GM12878 (cell line): ENCODE measurements at regions of chr1 and their contacts with region 1.

Region 1: GRCh38 chr1:45569962-45570581 is 13.8 kb upstream of the NASP start:
- DNase-seq: no peak
- ATAC-seq: peak; percentile 97
- H3K4me3 ChIP-seq: no peak overlapping the region
- H3K27ac ChIP-seq: no peak overlapping the region
- H3K4me1 ChIP-seq: no peaks in the 10 kb centered on the region
- H3K27me3 ChIP-seq: no peaks in the 10 kb centered on the region
- CTCF ChIP-seq: peak; percentile 97 to 99 (median 98); a peak in 5 of 6 replicates
- EP300 ChIP-seq: no peak
- POLR2A ChIP-seq: 0 out of 2 replicates have a peak, but pooled peaks have one; percentile 14
- RAD21 ChIP-seq: peak; percentile 95

Region 2: DNA sequence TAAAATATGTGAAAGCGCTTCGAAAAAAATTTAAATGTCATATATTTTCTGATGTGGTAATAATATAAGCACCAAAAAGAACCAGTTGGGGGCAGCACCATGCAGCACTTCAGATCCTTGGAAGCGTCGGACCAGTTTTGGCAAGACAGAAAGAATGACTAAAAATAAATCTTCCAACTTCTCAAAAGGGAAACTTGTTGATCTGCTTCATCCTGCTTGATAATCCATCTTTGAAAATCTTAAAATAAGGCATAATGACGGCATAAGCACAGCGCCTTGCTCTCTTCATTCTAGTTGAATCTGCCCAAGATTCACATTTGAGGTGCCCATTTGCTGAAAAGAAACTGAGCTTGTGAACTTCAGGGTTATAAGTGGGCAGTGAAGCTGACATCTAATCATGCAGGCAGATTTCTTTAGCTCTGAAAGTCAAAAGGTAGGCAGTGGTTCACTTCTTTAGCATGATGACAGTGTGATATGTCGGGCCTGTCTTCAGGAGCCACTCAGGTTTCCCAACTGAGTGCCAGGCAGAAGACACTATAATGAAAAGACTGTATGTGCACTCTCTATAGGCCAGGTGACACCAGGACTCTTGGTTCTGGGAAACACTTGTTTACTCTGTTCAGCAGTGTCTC is 210.1 kb before region 1 on chr1:
- CTCF ChIA-PET with region 1: interaction called, 9 read pairs
- POLR2A ChIA-PET with region 1: no interaction called
- RAD21 ChIA-PET with region 1: interaction called, 6 read pairs
- SMC1A ChIA-PET with region 1: interaction called, 21 read pairs
- in situ Hi-C with region 1: loop called (anchors 10 kb)
- intact Hi-C with region 1: loop called (anchors 5 kb)
- DNase-seq: no peak
- ATAC-seq: peak; percentile 81
- H3K4me3 ChIP-seq: no peak overlapping the region
- H3K27ac ChIP-seq: no peak overlapping the region
- H3K4me1 ChIP-seq: peaks cover 9% of the 10 kb centered on the region
- H3K27me3 ChIP-seq: no peaks in the 10 kb centered on the region
- CTCF ChIP-seq: peak; percentile 49 to 78 (median 59); a peak in 5 of 6 replicates
- EP300 ChIP-seq: no peak
- POLR2A ChIP-seq: no peak
- RAD21 ChIP-seq: peak; percentile 97

Region 3: DNA sequence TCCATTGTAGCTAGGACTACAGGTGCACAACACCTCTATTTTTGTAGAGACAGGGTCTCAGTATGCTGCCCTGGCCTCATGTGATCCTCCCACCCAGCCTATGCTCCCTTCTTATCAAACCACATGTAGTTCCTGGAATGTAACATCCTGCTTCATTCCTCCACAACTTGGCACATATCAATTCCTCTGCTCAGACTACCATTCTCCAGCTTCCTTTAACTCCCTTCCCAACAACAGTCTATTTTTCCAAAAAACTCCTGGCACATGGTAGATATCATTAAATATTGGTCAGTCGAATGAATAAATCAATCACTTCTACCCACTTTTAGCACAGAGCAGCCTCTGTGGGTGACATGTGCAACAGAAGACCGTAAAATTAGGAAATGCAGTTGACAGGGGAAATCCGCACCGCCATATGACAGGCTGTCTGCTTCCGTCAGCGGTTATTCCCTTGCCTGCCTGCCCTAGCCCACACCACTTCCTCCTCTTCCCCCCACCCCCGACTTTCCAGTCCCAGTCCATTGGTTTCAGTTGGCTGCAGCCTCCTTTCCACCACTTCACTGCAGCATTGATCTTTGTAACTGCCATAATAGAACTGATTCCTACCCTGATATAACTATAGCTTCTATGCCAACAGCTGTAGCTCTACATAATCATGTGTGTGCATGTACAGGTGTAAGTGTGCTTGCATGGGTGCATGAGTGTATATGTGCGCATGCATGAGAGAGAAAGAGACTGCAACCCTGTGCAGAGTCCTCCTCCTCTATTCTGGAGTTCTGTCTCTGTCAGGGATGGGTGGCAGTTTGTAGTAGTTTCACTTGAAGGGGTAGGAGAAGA is 26.3 kb before region 1 on chr1:
- CTCF ChIA-PET with region 1: interaction called, 23 read pairs
- POLR2A ChIA-PET with region 1: interaction called, 4 read pairs
- RAD21 ChIA-PET with region 1: interaction called, 3 read pairs
- SMC1A ChIA-PET with region 1: interaction called, 19 read pairs
- in situ Hi-C with region 1: no loop called
- intact Hi-C with region 1: no loop called
- DNase-seq: peak; percentile 76
- ATAC-seq: peak; percentile 79
- H3K4me3 ChIP-seq: peak overlapping the region; percentile 25; the same call in 1 of the 2 replicates
- H3K27ac ChIP-seq: peak overlapping the region; percentile 78
- H3K4me1 ChIP-seq: peaks cover 30% of the 10 kb centered on the region
- H3K27me3 ChIP-seq: no peaks in the 10 kb centered on the region
- CTCF ChIP-seq: no peak
- EP300 ChIP-seq: peak; percentile 84 to 93
- POLR2A ChIP-seq: 0 out of 2 replicates have a peak, but pooled peaks have one; percentile 29
- RAD21 ChIP-seq: no peak

Region 4: DNA sequence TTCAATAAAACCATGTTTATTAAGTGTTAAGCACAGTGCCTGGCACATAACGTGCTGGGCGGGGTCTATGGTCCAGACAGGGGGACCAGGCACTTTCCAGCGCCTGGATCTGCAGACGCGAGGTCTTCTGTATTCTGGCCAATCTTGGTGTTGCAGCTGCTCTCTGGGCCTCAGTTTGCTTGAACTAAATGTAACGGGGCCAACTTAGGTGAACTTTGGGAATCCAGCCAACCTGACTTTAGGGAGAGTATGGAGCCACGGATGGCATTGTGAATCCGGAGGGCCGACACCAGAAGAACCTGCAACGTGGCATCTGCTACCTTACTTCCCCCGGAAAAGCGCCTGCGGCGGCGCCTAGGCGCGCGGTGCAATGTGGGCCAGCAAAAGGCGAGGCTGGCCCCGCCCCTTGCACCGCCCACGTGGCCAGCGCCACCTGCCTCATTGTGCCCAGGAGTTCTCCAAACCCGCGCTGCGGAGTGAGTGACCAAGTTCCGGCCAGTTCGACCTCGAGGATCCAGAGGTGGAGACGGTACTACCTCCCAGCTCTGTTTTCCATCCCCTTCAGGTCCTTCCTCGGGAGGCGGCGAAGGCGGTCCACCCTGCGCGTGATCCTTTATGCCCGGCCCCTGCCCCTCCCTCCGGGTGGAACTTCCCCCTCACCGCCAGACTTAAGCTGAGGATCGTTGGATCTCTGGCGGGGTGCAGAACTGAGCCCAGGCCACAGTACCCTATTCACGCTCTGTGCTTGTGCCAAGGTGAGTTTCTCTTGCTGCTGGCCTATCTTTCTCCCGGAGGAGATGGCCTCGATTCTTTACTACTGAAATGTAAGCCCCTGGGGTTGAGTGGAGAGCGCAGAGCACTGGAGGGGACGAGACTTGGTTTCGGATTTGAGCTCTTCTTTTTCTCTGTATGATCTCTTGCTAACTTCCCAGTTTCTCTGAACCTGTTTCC is 19.4 kb before region 1 on chr1 and contains the start of gene AKR1A1:
- CTCF ChIA-PET with region 1: interaction called, 48 read pairs
- POLR2A ChIA-PET with region 1: interaction called, 3 read pairs
- RAD21 ChIA-PET with region 1: interaction called, 13 read pairs
- SMC1A ChIA-PET with region 1: interaction called, 19 read pairs
- in situ Hi-C with region 1: no loop called
- intact Hi-C with region 1: no loop called
- DNase-seq: peak; percentile 74
- ATAC-seq: peak; percentile 94
- H3K4me3 ChIP-seq: peak within 1 kb of the TSS; percentile 87
- H3K27ac ChIP-seq: peak within 1 kb of the TSS; percentile 91
- H3K4me1 ChIP-seq: peaks cover 16% of the 10 kb centered on the region
- H3K27me3 ChIP-seq: no peaks in the 10 kb centered on the region
- CTCF ChIP-seq: no peak
- EP300 ChIP-seq: no peak
- POLR2A ChIP-seq: peak; percentile 92
- RAD21 ChIP-seq: no peak
- polyA plus RNA-seq, gene AKR1A1: 199 to 200 TPM

Region 5: GRCh38 chr1:45557422-45557944 is 12.6 kb before region 1 on chr1:
- CTCF ChIA-PET with region 1: interaction called, 48 read pairs
- POLR2A ChIA-PET with region 1: interaction called, 12 read pairs
- RAD21 ChIA-PET with region 1: interaction called, 13 read pairs
- SMC1A ChIA-PET with region 1: interaction called, 24 read pairs
- in situ Hi-C with region 1: no loop called
- intact Hi-C with region 1: no loop called
- DNase-seq: no peak
- ATAC-seq: peak; percentile 65
- H3K4me3 ChIP-seq: no peak overlapping the region
- H3K27ac ChIP-seq: peak overlapping the region; percentile 69
- H3K4me1 ChIP-seq: peaks cover 7% of the 10 kb centered on the region
- H3K27me3 ChIP-seq: no peaks in the 10 kb centered on the region
- CTCF ChIP-seq: no peak
- EP300 ChIP-seq: no peak
- POLR2A ChIP-seq: no peak
- RAD21 ChIP-seq: no peak

Region 6: GRCh38 chr1:45583264-45583665 is 13.2 kb after region 1 on chr1:
- CTCF ChIA-PET with region 1: interaction called, 70 read pairs
- POLR2A ChIA-PET with region 1: interaction called, 8 read pairs
- RAD21 ChIA-PET with region 1: interaction called, 41 read pairs
- SMC1A ChIA-PET with region 1: interaction called, 35 read pairs
- in situ Hi-C with region 1: no loop called
- intact Hi-C with region 1: no loop called
- DNase-seq: peak; percentile 98
- ATAC-seq: peak; percentile 89
- H3K4me3 ChIP-seq: peak overlapping the region; percentile 94
- H3K27ac ChIP-seq: peak overlapping the region; percentile 97
- H3K4me1 ChIP-seq: peaks cover 12% of the 10 kb centered on the region; the same call in 1 of the 2 replicates
- H3K27me3 ChIP-seq: no peaks in the 10 kb centered on the region
- CTCF ChIP-seq: no peak
- EP300 ChIP-seq: no peak
- POLR2A ChIP-seq: no peak
- RAD21 ChIP-seq: no peak